GM12878 (cell line): ENCODE measurements at regions of chr2 and their contacts with region 1.

Region 1: DNA sequence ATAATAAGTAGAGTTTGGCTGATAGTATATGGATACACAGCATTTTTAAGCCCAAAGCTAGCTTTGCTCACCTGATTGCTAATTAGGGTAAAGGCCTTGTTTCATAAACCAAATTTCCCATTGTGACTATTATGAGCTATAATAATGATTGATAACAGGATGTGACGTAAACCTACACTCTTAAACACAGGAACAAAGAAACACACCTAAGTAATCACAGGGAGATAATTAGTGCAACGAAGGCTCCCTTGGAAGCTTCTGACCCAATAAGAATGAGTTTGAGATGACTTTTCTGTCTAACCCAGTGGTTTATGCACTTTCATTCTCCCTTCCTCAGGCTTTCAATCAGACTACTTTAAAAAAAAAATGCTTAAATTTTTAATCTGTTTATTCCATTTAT is 683.2 kb downstream of the SATB2 start:
- DNase-seq: no peak
- ATAC-seq: peak; percentile 84
- H3K4me3 ChIP-seq: no peak overlapping the region
- H3K27ac ChIP-seq: no peak overlapping the region
- H3K4me1 ChIP-seq: no peaks in the 10 kb centered on the region
- H3K27me3 ChIP-seq: no peaks in the 10 kb centered on the region
- CTCF ChIP-seq: no peak
- EP300 ChIP-seq: 0 out of 4 replicates have a peak, but pooled peaks of 1 of the 2 experiments have one; percentile 45
- POLR2A ChIP-seq: no peak
- RAD21 ChIP-seq: no peak

Region 2: GRCh38 chr2:198700319-198700718 is 74.3 kb before region 1 on chr2:
- CTCF ChIA-PET with region 1: interaction called, 3 read pairs
- POLR2A ChIA-PET with region 1: interaction called, 3 read pairs
- RAD21 ChIA-PET with region 1: interaction called, 33 read pairs
- SMC1A ChIA-PET with region 1: interaction called, 52 read pairs
- in situ Hi-C with region 1: no loop called
- intact Hi-C with region 1: no loop called
- DNase-seq: no peak
- ATAC-seq: peak; percentile 48
- H3K4me3 ChIP-seq: no peak overlapping the region
- H3K27ac ChIP-seq: no peak overlapping the region
- H3K4me1 ChIP-seq: no peaks in the 10 kb centered on the region
- H3K27me3 ChIP-seq: no peaks in the 10 kb centered on the region
- CTCF ChIP-seq: no peak
- EP300 ChIP-seq: 0 out of 4 replicates have a peak, but pooled peaks of 1 of the 2 experiments have one; percentile 25
- POLR2A ChIP-seq: no peak
- RAD21 ChIP-seq: no peak

Region 3: GRCh38 chr2:198715302-198715835 is 59.2 kb before region 1 on chr2:
- CTCF ChIA-PET with region 1: interaction called, 5 read pairs
- POLR2A ChIA-PET with region 1: interaction called, 4 read pairs
- RAD21 ChIA-PET with region 1: interaction called, 4 read pairs
- SMC1A ChIA-PET with region 1: interaction called, 12 read pairs
- in situ Hi-C with region 1: no loop called
- intact Hi-C with region 1: no loop called
- DNase-seq: no peak
- ATAC-seq: peak; percentile 25
- H3K4me3 ChIP-seq: no peak overlapping the region
- H3K27ac ChIP-seq: no peak overlapping the region
- H3K4me1 ChIP-seq: no peaks in the 10 kb centered on the region
- H3K27me3 ChIP-seq: no peaks in the 10 kb centered on the region
- CTCF ChIP-seq: no peak
- EP300 ChIP-seq: no peak
- POLR2A ChIP-seq: no peak
- RAD21 ChIP-seq: no peak

Region 4: GRCh38 chr2:198762441-198762840 is 12.1 kb before region 1 on chr2:
- CTCF ChIA-PET with region 1: interaction called, 9 read pairs
- POLR2A ChIA-PET with region 1: interaction called, 7 read pairs
- RAD21 ChIA-PET with region 1: interaction called, 12 read pairs
- SMC1A ChIA-PET with region 1: interaction called, 93 read pairs
- in situ Hi-C with region 1: no loop called
- intact Hi-C with region 1: no loop called
- DNase-seq: no peak
- ATAC-seq: peak; percentile 45
- H3K4me3 ChIP-seq: no peak overlapping the region
- H3K27ac ChIP-seq: no peak overlapping the region
- H3K4me1 ChIP-seq: no peaks in the 10 kb centered on the region
- H3K27me3 ChIP-seq: no peaks in the 10 kb centered on the region
- CTCF ChIP-seq: no peak
- EP300 ChIP-seq: no peak
- POLR2A ChIP-seq: no peak
- RAD21 ChIP-seq: no peak

Region 5: DNA sequence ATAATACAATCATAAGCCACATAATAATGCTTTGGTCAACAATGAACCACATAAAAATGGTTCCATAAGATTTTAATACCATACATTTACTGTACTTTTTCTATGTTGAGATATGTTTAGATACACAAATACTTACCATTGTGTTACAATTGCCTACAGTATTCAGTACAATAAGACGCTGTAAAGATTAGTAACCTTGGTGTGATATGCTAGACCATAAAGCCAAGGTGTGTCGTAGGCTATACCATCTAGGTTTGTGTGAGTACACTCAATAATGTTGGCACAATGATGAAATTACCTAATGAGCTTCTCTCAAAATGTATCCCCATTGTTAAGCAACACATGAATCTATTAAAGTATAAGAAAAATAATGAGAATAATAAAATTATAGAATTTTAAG is 20.8 kb after region 1 on chr2:
- CTCF ChIA-PET with region 1: interaction called, 16 read pairs
- POLR2A ChIA-PET with region 1: interaction called, 3 read pairs
- RAD21 ChIA-PET with region 1: interaction called, 4 read pairs
- SMC1A ChIA-PET with region 1: interaction called, 130 read pairs
- in situ Hi-C with region 1: no loop called
- intact Hi-C with region 1: no loop called
- DNase-seq: no peak
- ATAC-seq: no peak
- H3K4me3 ChIP-seq: no peak overlapping the region
- H3K27ac ChIP-seq: no peak overlapping the region
- H3K4me1 ChIP-seq: no peaks in the 10 kb centered on the region
- H3K27me3 ChIP-seq: no peaks in the 10 kb centered on the region
- CTCF ChIP-seq: no peak
- EP300 ChIP-seq: no peak
- POLR2A ChIP-seq: no peak
- RAD21 ChIP-seq: no peak

Region 6: GRCh38 chr2:198913394-198914152 is 139.0 kb after region 1 on chr2:
- CTCF ChIA-PET with region 1: interaction called, 3 read pairs
- POLR2A ChIA-PET with region 1: interaction called, 5 read pairs
- RAD21 ChIA-PET with region 1: interaction called, 11 read pairs
- SMC1A ChIA-PET with region 1: interaction called, 12 read pairs
- in situ Hi-C with region 1: no loop called
- intact Hi-C with region 1: no loop called
- DNase-seq: peak; percentile 89
- ATAC-seq: peak; percentile 96
- H3K4me3 ChIP-seq: no peak overlapping the region
- H3K27ac ChIP-seq: peak overlapping the region; percentile 58
- H3K4me1 ChIP-seq: peaks cover 9% of the 10 kb centered on the region
- H3K27me3 ChIP-seq: no peaks in the 10 kb centered on the region
- CTCF ChIP-seq: no peak
- EP300 ChIP-seq: peak; percentile 97 to 98
- POLR2A ChIP-seq: no peak
- RAD21 ChIP-seq: no peak

Region 7: DNA sequence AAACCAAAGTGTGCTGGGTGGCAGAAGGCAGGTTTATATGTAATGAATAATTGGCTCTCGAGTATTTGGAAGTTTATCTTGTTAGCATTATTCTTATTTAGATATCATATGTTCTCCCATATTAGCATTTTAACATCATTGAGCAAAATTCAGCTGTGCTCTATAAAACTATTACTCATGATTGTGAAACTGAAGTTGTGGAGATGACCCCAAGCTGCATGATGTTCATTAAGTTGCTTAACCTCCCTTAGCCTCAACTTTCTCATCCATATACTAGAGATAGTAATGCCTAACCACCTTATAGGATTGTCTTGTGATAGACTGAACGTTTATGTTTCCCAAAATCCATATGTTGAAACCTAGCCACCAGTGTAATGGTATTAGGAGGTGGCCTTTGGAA is 336.9 kb after region 1 on chr2:
- CTCF ChIA-PET with region 1: no interaction called
- POLR2A ChIA-PET with region 1: no interaction called
- RAD21 ChIA-PET with region 1: no interaction called
- SMC1A ChIA-PET with region 1: no interaction called
- in situ Hi-C with region 1: no loop called
- intact Hi-C with region 1: no loop called
- DNase-seq: no peak
- ATAC-seq: no peak
- H3K4me3 ChIP-seq: no peak overlapping the region
- H3K27ac ChIP-seq: no peak overlapping the region
- H3K4me1 ChIP-seq: no peaks in the 10 kb centered on the region
- H3K27me3 ChIP-seq: no peaks in the 10 kb centered on the region
- CTCF ChIP-seq: no peak
- EP300 ChIP-seq: no peak
- POLR2A ChIP-seq: no peak
- RAD21 ChIP-seq: no peak

Region 8: DNA sequence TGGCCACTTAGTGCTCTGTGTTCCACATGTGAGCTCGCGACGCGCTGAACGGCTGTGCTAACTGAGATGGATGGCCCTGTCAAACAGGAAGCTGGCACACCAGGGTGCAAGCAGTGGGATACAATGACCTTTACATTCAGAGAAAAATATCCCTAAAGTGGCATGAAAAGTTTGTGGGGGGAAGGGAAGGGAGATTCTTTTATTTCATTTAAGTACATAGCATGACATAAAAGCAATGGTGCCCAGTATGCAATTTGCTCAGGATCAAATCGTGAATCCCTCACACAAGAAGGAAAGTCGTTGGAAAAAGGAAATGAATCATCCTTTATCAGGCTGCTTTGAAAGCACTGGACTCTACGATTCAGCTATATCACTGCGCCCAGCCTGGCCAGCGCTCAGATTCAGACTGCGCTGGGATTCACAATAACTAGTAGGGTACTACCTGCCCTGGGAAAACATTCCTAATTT is 657.2 kb after region 1 on chr2:
- CTCF ChIA-PET with region 1: no interaction called
- POLR2A ChIA-PET with region 1: no interaction called
- RAD21 ChIA-PET with region 1: no interaction called
- SMC1A ChIA-PET with region 1: no interaction called
- in situ Hi-C with region 1: no loop called
- intact Hi-C with region 1: no loop called
- DNase-seq: no peak
- ATAC-seq: no peak
- H3K4me3 ChIP-seq: no peak overlapping the region
- H3K27ac ChIP-seq: no peak overlapping the region
- H3K4me1 ChIP-seq: no peaks in the 10 kb centered on the region
- H3K27me3 ChIP-seq: no peaks in the 10 kb centered on the region
- CTCF ChIP-seq: no peak
- EP300 ChIP-seq: no peak
- POLR2A ChIP-seq: no peak
- RAD21 ChIP-seq: no peak